Mammary epithelial cell (primary cell): ENCODE measurements at regions of chr13 and their contacts with region 1.

Region 1: GRCh38 chr13:23871616-23872220 is 17.5 kb downstream of the MIPEP start:
- DNase-seq: no peak
- H3K4me3 ChIP-seq: no peak overlapping the region
- H3K27ac ChIP-seq: no peak overlapping the region
- H3K4me1 ChIP-seq: peaks cover 6% of the 10 kb centered on the region
- H3K27me3 ChIP-seq: no peaks in the 10 kb centered on the region
- CTCF ChIP-seq: peak; percentile 36 to 51

Region 2: GRCh38 chr13:23466144-23467002 is 405.3 kb before region 1 on chr13:
- CTCF ChIA-PET with region 1: no interaction called
- dilution Hi-C with region 1: no loop called
- in situ Hi-C with region 1: loop called (anchors 10 to 25 kb)
- intact Hi-C with region 1: loop called (anchors 1 kb)
- DNase-seq: peak; percentile 75
- H3K4me3 ChIP-seq: peak overlapping the region; percentile 40 to 48 (median 45)
- H3K27ac ChIP-seq: no peak overlapping the region
- H3K4me1 ChIP-seq: peaks cover 9% of the 10 kb centered on the region
- H3K27me3 ChIP-seq: peaks cover 6% of the 10 kb centered on the region
- CTCF ChIP-seq: peak; percentile 44 to 59

Region 3: DNA sequence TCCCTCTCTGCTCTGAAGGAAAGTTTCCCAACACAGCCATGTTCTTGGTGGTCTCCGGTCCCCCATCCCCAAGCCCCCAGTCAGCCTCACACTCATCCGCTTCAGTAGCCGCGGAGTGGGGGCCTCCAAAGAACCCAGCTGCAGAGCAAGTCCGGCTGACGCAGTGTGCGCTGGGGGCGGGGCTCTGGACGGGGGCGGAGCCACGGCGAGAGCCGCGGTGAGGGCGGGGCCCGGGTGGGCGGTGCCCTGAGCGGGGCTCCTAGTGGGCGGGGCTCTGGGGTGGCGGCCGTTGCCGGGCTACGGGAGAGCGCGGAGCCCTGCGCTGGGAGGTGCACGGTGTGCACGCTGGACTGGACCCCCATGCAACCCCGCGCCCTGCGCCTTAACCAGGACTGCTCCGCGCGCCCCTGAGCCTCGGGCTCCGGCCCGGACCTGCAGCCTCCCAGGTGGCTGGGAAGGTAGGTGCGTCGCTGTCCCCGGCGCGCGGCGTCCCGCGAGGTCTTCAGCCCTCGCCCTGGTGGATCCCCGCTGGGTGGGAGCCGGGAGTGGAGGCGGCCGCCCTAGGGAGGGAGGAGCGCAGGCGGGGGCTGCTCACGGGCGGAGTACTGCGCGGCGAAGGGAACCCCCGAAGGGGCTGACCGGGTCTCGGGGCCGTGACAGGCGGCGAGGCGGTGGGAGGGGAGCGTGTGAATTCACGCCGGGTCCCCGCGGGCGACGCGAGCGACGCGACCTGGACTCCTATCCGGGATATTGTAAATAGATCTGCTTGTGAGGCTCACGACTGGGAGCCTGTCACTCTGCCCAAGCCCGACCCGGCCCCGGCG is 292.4 kb before region 1 on chr13:
- CTCF ChIA-PET with region 1: no interaction called
- dilution Hi-C with region 1: no loop called
- in situ Hi-C with region 1: loop called in 1 of 2 experiments (anchors 25 kb)
- intact Hi-C with region 1: loop called (anchors 2 kb)
- DNase-seq: peak; percentile 82
- H3K4me3 ChIP-seq: peak overlapping the region; percentile 65 to 97 (median 68)
- H3K27ac ChIP-seq: peak overlapping the region; percentile 39
- H3K4me1 ChIP-seq: peaks cover 8% of the 10 kb centered on the region
- H3K27me3 ChIP-seq: peaks cover 10% of the 10 kb centered on the region
- CTCF ChIP-seq: no peak

Region 4: DNA sequence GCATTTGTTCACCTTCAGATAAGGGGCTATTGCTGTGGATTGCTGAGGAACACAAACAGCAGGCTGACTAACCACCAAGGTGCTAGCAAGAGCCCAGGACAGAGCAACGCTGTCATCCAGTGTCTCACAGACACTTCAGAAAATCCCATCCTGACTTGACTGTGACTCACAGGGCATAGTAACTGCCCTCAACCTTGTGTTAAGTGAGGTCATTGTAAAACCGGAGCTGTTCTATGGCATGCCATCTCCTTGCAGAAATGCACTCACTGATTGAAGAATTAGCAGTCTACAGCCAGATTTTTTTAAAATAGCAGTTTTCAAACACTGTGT is 250.4 kb before region 1 on chr13:
- CTCF ChIA-PET with region 1: no interaction called
- dilution Hi-C with region 1: no loop called
- in situ Hi-C with region 1: no loop called
- intact Hi-C with region 1: no loop called
- DNase-seq: peak; percentile 97
- H3K4me3 ChIP-seq: no peak overlapping the region
- H3K27ac ChIP-seq: peak overlapping the region; percentile 28
- H3K4me1 ChIP-seq: peaks cover 18% of the 10 kb centered on the region
- H3K27me3 ChIP-seq: no peaks in the 10 kb centered on the region
- CTCF ChIP-seq: no peak

Region 5: DNA sequence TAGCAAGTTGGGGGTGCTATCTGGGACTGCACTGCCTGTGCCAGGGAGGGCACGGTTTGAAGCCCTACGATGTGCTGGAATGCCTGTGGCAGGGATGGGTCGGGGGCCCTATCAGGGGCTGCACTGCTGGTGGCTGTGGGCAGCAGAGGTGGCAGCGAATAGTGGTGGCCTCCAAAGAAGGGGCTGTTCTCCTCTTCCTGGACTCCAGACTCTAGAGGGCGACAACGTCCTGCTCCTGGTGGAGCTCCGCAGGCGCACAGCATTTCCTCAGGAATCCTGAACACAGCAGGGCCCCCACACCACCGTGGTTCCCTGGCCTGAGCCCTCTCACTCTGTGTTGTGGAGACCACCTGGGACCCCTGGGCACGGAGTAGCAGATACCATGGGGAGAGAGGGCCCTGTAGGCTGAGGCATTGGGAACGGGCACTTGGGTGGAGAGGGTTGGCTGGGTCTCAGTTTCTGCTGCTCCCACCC is 155.9 kb before region 1 on chr13:
- CTCF ChIA-PET with region 1: interaction called, 3 read pairs
- dilution Hi-C with region 1: no loop called
- in situ Hi-C with region 1: no loop called
- intact Hi-C with region 1: loop called (anchors 1 kb)
- DNase-seq: no peak
- H3K4me3 ChIP-seq: no peak overlapping the region
- H3K27ac ChIP-seq: no peak overlapping the region
- H3K4me1 ChIP-seq: no peaks in the 10 kb centered on the region
- H3K27me3 ChIP-seq: no peaks in the 10 kb centered on the region
- CTCF ChIP-seq: peak in 1 of 2 donors; percentile 48

Region 6: DNA sequence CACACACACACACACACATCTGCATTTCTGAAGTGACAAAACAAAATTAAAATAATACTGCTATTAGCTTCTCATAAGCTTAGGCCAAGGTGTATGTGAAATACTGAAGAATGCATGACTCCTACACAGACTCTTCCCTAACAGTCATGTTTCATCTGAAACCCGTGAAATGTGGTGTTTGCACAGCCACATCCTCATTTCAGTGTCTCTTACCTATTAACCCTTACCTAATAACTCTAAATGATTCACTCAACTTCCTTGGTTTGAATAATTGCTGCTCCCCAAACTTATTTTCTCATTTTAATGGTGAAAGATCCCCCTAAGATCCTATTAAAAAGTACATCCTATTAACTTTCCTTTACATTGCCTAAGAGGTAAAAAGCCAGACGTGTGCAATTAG is 100.2 kb before region 1 on chr13:
- CTCF ChIA-PET with region 1: no interaction called
- dilution Hi-C with region 1: no loop called
- in situ Hi-C with region 1: no loop called
- intact Hi-C with region 1: loop called (anchors 5 kb)
- DNase-seq: peak; percentile 73
- H3K4me3 ChIP-seq: peak overlapping the region in 1 of 3 experiments; percentile 12
- H3K27ac ChIP-seq: peak overlapping the region; percentile 61
- H3K4me1 ChIP-seq: peaks cover 22% of the 10 kb centered on the region
- H3K27me3 ChIP-seq: no peaks in the 10 kb centered on the region
- CTCF ChIP-seq: no peak

Region 7: GRCh38 chr13:23899555-23899954 is 27.8 kb after region 1 on chr13:
- CTCF ChIA-PET with region 1: no interaction called
- dilution Hi-C with region 1: no loop called
- in situ Hi-C with region 1: no loop called
- intact Hi-C with region 1: loop called (anchors 1 kb)
- DNase-seq: peak; percentile 27
- H3K4me3 ChIP-seq: no peak overlapping the region
- H3K27ac ChIP-seq: no peak overlapping the region
- H3K4me1 ChIP-seq: peaks cover 12% of the 10 kb centered on the region
- H3K27me3 ChIP-seq: peaks cover 16% of the 10 kb centered on the region
- CTCF ChIP-seq: peak; percentile 65 to 68